Activated CD4-positive, alpha-beta T cell treated with anti-CD3 and anti-CD28 coated beads, Interleukin-2, amount 10 ng/mL, durations not matched to agents 24 days and 14 days (primary cell): ENCODE measurements at regions of chr4 and their contacts with region 1.

Region 1: GRCh38 chr4:15882675-15883086 is 55.9 kb downstream of the FGFBP1 start:
- DNase-seq: peak; percentile 81
- H3K4me3 Mint-ChIP-seq: no peak overlapping the region
- H3K27ac Mint-ChIP-seq: no peak overlapping the region
- H3K4me1 Mint-ChIP-seq: no peaks in the 10 kb centered on the region
- H3K27me3 Mint-ChIP-seq: peaks cover 17% of the 10 kb centered on the region

Region 2: GRCh38 chr4:15729910-15730533 is 152.7 kb before region 1 on chr4:
- intact Hi-C with region 1: loop called (anchors 2 kb)
- DNase-seq: peak; percentile 81
- H3K4me3 Mint-ChIP-seq: no peak overlapping the region
- H3K27ac Mint-ChIP-seq: no peak overlapping the region
- H3K4me1 Mint-ChIP-seq: peaks cover 21% of the 10 kb centered on the region
- H3K27me3 Mint-ChIP-seq: peaks cover 2% of the 10 kb centered on the region

Region 3: DNA sequence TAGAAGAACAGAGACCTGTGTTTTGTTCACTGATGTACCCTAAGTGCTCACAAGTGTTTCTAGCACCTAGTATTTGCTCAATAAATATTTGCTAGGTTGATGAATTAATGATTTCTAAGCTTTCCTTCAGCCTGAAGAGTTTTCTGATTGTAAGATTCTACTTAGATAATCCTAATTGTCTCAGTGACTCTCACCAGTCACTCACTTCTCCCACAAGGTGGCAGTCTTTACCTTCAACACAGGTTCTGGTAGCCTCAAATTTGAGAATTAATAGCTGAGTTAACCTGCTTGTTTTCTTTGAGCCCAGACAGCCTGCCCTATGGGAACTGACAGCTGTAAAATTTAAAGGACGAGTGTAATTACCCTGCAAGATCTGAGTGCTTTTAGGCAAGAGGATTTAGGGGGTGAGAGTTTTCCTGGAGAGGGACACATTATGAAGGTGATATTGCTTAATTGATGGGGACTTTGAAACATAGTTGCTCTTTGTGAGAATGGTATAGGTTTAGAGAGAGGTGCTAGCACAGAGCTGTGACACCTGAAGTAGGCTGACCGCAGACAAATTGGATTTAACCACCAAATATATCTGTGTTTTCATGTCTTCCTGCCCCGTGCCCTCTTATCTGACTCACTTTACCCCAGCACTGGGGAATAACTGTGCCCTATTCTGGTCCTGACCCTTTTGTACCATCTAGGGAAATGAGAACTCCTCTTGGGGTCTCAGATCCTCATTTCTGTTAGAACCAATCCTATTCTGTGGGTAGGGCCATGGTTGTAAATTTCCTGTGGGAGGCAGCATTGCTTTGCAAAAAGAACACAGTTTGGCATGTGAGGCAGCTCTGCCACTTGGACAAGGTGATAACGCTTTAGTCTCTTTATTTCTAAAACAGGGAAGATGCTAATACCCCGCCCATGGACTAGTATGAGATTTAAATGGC is 76.8 kb before region 1 on chr4:
- intact Hi-C with region 1: loop called (anchors 1 kb)
- DNase-seq: peak; percentile 81
- H3K4me3 Mint-ChIP-seq: no peak overlapping the region
- H3K27ac Mint-ChIP-seq: peak overlapping the region; percentile 23
- H3K4me1 Mint-ChIP-seq: peaks cover 46% of the 10 kb centered on the region
- H3K27me3 Mint-ChIP-seq: no peaks in the 10 kb centered on the region

Region 4: GRCh38 chr4:15963001-15963451 is 80.3 kb after region 1 on chr4 and contains the start of gene FGFBP2:
- intact Hi-C with region 1: no loop called
- DNase-seq: peak; percentile 86
- H3K4me3 Mint-ChIP-seq: peak within 1 kb of the TSS; percentile 35
- H3K27ac Mint-ChIP-seq: peak within 1 kb of the TSS; percentile 37
- H3K4me1 Mint-ChIP-seq: peaks cover 12% of the 10 kb centered on the region
- H3K27me3 Mint-ChIP-seq: peaks cover 12% of the 10 kb centered on the region
- total RNA-seq, gene FGFBP2: 1.8 and 2.0 TPM in 2 replicates

Region 5: GRCh38 chr4:16264798-16265197 is 382.1 kb after region 1 on chr4:
- intact Hi-C with region 1: loop called (anchors 10 kb)
- DNase-seq: no peak
- H3K4me3 Mint-ChIP-seq: no peak overlapping the region
- H3K27ac Mint-ChIP-seq: no peak overlapping the region
- H3K4me1 Mint-ChIP-seq: peaks cover 2% of the 10 kb centered on the region
- H3K27me3 Mint-ChIP-seq: peaks cover 2% of the 10 kb centered on the region